ENCODE measurements at regions of chr1 and their contacts with region 1.

Region 1: DNA sequence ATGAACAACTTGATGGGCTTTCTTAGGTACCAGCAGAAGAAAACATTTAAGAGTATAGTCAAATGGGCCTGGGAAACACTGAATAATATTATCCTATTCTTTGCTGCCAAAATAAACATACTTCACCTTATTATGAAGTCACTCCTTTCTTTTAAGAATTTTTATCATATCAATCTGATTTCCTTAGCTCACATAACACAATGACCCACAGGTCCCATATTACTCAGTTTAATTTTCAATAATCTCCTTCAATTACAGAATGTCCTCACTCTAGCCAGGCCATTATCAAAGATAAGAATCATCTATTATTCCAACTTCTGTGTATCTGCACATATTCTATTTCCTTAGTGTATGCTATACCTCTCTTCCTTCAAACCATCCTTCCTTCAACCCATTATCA is 63.0 kb downstream of the PIGK start:
- DNase-seq: no peak
- H3K4me3 ChIP-seq: no peak overlapping the region
- H3K27ac ChIP-seq: no peak overlapping the region
- H3K4me1 ChIP-seq: no peaks in the 10 kb centered on the region
- H3K27me3 ChIP-seq: no peaks in the 10 kb centered on the region
- CTCF ChIP-seq: no peak
- EP300 ChIP-seq: no peak
- POLR2A ChIP-seq: no peak

Region 2: GRCh38 chr1:77533660-77534305 is 377.6 kb after region 1 on chr1:
- intact Hi-C with region 1: loop called (anchors 10 kb)
- DNase-seq: peak; percentile 56 to 87
- H3K4me3 ChIP-seq: peak overlapping the region in 1 of 4 donors; percentile 13
- H3K27ac ChIP-seq: no peak overlapping the region
- H3K4me1 ChIP-seq: peaks cover 0 to 16% (median 4%) of the 10 kb centered on the region in 4 donors
- H3K27me3 ChIP-seq: no peaks in the 10 kb centered on the region
- CTCF ChIP-seq: peak in 5 of 7 experiments; percentile 65 to 87 (median 83)
- EP300 ChIP-seq: no peak
- POLR2A ChIP-seq: no peak

Measured in stomach (tissue), 19 donors.